ENCODE measurements at regions of chr17 and their contacts with region 1.

Region 1: DNA sequence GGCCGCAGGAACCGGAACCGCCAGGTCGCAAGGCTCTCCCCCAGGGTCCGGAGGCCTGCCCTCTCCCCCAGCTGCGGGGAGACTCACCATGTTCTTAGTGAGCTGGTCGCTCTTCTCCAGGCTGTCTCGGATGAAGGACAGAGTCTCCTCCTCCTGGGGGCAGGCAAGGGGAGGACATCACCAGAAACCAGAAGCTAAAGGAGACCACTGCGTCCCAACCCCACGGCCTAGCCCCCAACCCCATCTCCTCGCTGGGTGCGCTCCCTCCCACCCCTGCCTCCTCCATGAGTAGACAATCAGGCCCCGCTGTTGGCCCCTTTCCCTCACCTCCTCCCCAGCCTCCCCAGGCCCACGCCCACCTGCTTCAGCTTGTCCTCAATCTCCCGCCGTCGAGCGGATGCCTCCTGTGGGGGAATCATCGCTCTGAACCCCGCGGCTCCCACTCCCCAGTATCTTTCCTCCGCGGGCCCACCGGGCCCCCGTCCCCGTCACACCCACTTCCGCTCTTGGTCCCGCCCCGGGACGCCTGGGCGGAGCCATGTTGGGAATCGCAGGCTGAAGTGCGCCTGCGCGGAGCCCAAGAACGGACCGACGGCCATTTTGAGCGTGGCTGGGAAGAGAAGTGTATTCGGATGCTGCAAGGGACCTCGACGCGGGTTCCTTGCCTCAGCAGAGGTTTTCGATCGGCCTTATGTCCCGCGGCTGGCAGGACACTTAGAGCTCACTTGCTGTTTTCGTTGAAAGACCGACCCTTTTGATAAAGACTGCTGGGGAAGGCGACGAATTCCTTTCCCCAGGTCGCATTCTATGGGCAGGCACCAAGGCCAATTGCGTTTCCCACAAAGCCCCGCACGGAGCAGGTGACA is at the start of gene EXOC7:
- DNase-seq: peak; percentile 98
- total RNA-seq, gene EXOC7: 86.9 TPM

Region 2: DNA sequence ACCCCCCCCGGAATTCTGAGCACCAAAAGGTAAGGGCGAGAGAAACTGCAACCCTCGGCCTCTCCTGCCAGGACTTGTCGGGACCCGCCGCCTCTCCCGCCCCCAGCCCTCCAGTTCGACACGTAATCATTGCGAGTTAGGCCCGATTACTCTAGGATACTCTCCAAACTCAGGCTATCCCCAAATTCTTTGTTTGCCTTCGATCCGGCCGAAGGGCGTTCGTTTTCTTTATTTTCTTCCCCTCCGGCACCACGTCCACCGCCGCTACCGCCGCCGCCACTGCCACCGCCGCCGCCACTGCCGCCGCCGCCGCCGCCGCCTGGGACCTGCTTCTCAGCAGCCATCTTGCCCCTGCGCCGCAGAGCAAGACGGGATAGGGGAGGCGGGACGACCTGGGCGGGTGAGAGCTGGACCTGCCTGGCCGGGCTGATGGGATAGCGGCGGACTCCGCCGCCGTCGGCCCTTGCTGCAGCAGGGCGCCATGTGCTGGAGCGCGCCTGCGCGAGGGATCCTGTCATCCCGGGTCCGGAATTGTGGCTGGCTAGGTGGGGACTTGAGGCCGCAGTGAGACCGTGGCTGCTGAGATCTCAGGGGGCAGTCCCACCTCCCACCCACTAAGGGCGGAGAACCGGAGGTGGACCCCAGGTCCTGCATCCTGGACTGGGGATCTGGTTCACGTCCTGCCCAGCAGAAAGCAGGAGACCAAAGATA is 31.2 kb before region 1 on chr17 and contains the start of gene SRP68:
- intact Hi-C with region 1: loop called (anchors 2 kb)
- DNase-seq: peak; percentile 98
- total RNA-seq, gene SRP68: 53.9 TPM